Tibial artery (tissue), 4 donors: ENCODE measurements at regions of chr2 and their contacts with region 1.

Region 1: DNA sequence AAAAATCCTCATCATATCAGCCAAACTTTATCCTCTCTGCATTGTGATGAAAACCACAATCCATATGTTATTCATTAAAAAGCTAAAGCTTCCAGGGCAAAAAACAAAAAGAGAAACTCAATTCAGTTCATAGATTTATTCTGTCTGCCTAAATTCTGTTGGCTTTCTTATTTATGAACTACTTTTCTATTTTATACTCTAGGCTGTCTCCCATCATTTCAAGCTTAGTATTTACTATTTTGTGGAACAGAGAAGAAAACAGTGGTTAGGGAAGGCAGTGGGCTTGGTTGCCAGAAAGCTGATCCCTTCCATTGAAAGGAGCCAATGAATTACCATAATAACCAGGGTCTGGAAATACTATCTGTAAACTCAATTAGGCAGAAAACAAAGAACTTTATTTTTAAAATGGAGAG is 71.8 kb downstream of the RAPH1 start:
- DNase-seq: no peak
- H3K4me3 ChIP-seq: no peak overlapping the region
- H3K27ac ChIP-seq: no peak overlapping the region
- H3K4me1 ChIP-seq: peaks cover 0 to 4% (median 0%) of the 10 kb centered on the region in 4 donors
- H3K27me3 ChIP-seq: no peaks in the 10 kb centered on the region
- CTCF ChIP-seq: no peak

Region 2: GRCh38 chr2:202450785-202451184 is 1012.5 kb before region 1 on chr2:
- intact Hi-C with region 1: loop called (anchors 10 kb)
- DNase-seq: no peak
- H3K4me3 ChIP-seq: no peak overlapping the region
- H3K27ac ChIP-seq: peak overlapping the region; percentile 22 to 30
- H3K4me1 ChIP-seq: peaks cover 0 to 40% (median 13%) of the 10 kb centered on the region in 4 donors
- H3K27me3 ChIP-seq: no peaks in the 10 kb centered on the region
- CTCF ChIP-seq: no peak

Region 3: GRCh38 chr2:203394519-203395227 is 68.6 kb before region 1 on chr2:
- intact Hi-C with region 1: no loop called
- DNase-seq: no peak
- H3K4me3 ChIP-seq: no peak overlapping the region
- H3K27ac ChIP-seq: no peak overlapping the region
- H3K4me1 ChIP-seq: no peaks in the 10 kb centered on the region
- H3K27me3 ChIP-seq: no peaks in the 10 kb centered on the region
- CTCF ChIP-seq: no peak